PC-3 (cell line): ENCODE measurements at regions of chr4 and their contacts with region 1.

Region 1: DNA sequence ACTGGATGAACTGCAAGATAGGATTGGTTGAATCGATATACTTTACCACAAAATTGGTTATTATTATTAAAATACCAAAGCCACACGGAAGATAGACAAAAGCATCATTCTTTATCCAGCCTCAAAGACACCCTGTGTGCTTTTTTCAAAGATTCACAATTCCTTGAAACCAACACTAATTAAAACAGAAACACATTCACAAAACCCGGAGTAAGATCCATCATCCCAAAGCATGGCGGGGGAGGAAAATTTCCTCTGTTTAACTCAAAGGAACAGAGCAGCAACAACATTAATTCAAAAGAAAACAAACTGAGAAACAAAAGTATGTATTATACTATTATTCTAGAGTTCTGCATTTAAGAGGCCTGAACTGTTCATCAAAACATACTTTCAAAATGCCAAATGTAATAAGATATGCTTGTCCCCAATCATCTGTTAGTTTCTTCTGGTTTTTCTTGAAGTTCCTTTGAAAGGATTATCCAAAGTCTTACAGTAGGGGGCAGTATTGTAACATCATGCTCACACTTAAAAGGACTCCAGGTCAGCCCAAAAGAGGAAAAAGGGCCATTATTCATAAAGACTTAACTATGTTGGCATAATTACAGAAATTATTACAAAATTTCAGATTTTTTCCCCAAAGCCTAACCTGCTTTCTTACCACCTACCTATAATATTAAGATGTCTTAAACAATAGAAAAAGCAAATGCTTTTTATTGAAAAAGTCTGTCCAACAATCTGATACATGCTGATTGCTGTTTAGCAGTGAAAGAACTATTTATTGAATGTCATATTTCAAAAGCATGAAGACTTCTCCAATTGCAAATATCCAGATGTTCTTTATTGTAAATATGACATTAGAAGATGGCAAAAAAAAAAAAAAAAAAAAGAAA is 168.7 kb downstream of the SCFD2 start:
- DNase-seq: peak; percentile 89
- ATAC-seq: peak; percentile 71
- H3K4me3 ChIP-seq: no peak overlapping the region
- H3K27ac ChIP-seq: no peak overlapping the region
- H3K4me1 ChIP-seq: no peaks in the 10 kb centered on the region
- H3K27me3 ChIP-seq: no peaks in the 10 kb centered on the region
- CTCF ChIP-seq: peak; percentile 95

Region 2: DNA sequence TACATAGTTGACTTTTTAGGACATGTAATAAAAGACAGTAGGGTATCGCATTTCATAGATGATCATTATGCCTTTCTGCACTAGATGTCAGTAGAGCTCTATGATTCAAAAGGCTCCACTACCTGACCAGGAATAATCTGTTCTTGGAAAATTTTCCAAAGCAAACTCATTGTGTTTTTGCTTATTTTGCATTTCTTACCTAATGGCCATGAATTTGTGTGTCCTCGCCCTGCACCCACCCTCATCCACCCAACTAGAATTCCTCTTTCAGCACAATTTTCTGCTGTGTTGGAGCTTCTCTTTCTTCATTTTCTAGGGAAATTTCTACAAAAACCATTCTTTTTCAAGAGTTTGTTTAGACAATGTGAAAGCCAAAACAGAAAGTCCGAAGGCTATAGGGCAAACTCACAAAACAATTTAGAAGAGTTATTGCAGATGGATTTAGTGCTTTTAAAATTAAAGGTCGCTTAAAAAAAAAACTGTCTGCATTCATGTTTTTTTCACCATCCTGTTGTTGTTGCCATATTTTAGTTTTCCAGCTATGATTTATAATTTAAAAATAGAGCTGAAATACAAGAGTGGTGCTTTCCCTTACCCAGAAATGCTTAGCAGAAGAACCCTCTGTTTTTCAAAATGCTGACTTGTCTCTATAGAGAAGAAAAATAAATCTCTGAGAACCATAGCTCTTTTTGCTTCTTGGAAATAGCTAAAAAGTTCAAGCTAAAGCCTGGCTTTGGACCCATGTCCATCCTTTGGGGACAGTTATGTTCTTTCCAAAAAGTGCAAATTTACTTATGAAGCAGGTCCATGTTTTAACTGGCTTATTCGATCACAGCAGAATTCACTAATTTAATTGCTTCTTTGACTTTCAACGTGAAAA is 962.3 kb before region 1 on chr4:
- CTCF ChIA-PET with region 1: no interaction called
- POLR2A ChIA-PET with region 1: no interaction called
- intact Hi-C with region 1: loop called (anchors 5 kb)
- DNase-seq: peak; percentile 91
- ATAC-seq: peak; percentile 99
- H3K4me3 ChIP-seq: peak overlapping the region; percentile 50
- H3K27ac ChIP-seq: no peak overlapping the region
- H3K4me1 ChIP-seq: 0 out of 2 replicates have a peak, but pooled peaks cover 3% of the 10 kb centered on the region
- H3K27me3 ChIP-seq: peaks cover 13% of the 10 kb centered on the region; the same call in 1 of the 2 replicates
- CTCF ChIP-seq: peak; percentile 95

Region 3: GRCh38 chr4:53313510-53313909 is 116.4 kb after region 1 on chr4:
- CTCF ChIA-PET with region 1: no interaction called
- POLR2A ChIA-PET with region 1: no interaction called
- intact Hi-C with region 1: loop called (anchors 1 kb)
- DNase-seq: peak; percentile 53
- ATAC-seq: peak; percentile 85
- H3K4me3 ChIP-seq: no peak overlapping the region
- H3K27ac ChIP-seq: no peak overlapping the region
- H3K4me1 ChIP-seq: no peaks in the 10 kb centered on the region
- H3K27me3 ChIP-seq: no peaks in the 10 kb centered on the region
- CTCF ChIP-seq: peak; percentile 57

Region 4: DNA sequence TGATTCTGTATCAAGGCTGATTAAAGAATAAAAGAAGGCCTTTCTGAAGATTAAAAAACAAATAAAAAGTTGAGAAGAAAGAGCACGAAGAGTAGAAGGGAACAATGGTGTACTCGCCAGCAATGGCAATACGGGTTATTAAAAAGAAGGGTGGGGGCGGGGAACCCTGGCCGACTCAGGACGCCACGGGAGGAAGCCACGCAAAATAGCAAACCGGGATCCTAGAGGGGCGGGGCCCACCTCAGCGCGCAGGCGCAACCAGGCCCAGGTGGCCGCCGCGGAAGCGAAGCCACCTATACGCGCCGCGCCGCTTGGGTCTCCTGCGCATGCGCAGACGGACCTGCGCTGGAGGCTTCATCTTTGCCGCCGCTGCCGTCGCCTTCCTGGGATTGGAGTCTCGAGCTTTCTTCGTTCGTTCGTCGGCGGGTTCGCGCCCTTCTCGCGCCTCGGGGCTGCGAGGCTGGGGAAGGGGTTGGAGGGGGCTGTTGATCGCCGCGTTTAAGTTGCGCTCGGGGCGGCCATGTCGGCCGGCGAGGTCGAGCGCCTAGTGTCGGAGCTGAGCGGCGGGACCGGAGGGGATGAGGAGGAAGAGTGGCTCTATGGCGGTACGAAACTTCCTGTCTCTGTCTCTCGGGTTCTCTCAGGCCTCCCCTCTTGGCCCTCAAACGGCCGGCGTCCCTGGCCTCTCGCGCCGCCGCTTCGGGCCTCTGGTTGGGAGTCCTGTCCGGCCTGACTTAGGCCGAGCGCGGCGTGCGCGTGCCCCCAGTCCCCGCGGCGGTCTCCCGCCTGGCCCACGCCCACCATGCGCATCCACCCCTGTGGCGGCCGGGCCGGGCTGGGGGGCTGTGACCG is 180.4 kb after region 1 on chr4 and contains the start of gene FIP1L1:
- CTCF ChIA-PET with region 1: no interaction called
- POLR2A ChIA-PET with region 1: no interaction called
- intact Hi-C with region 1: loop called (anchors 5 kb)
- DNase-seq: peak; percentile 98
- ATAC-seq: peak; percentile 94
- H3K4me3 ChIP-seq: peak within 1 kb of the TSS; percentile 87
- H3K27ac ChIP-seq: peak within 1 kb of the TSS; percentile 41
- H3K4me1 ChIP-seq: peaks cover 25% of the 10 kb centered on the region
- H3K27me3 ChIP-seq: no peaks in the 10 kb centered on the region
- CTCF ChIP-seq: no peak
- total RNA-seq, gene FIP1L1: 76.1 and 102 TPM in 2 replicates

Region 5: GRCh38 chr4:53558065-53558801 is 361.1 kb after region 1 on chr4:
- CTCF ChIA-PET with region 1: interaction called, 16 read pairs
- POLR2A ChIA-PET with region 1: no interaction called
- intact Hi-C with region 1: no loop called
- DNase-seq: peak; percentile 90
- ATAC-seq: peak; percentile 96
- H3K4me3 ChIP-seq: peak overlapping the region; percentile 11; the same call in 1 of the 2 replicates
- H3K27ac ChIP-seq: peak overlapping the region; percentile 27; the same call in 1 of the 2 replicates
- H3K4me1 ChIP-seq: peaks cover 22% of the 10 kb centered on the region
- H3K27me3 ChIP-seq: no peaks in the 10 kb centered on the region
- CTCF ChIP-seq: no peak

Region 6: GRCh38 chr4:53908661-53909078 is 711.5 kb after region 1 on chr4:
- CTCF ChIA-PET with region 1: no interaction called
- POLR2A ChIA-PET with region 1: no interaction called
- intact Hi-C with region 1: loop called (anchors 1 kb)
- DNase-seq: peak; percentile 95
- ATAC-seq: peak; percentile 85
- H3K4me3 ChIP-seq: peak overlapping the region; percentile 55
- H3K27ac ChIP-seq: peak overlapping the region; percentile 27
- H3K4me1 ChIP-seq: peaks cover 25% of the 10 kb centered on the region
- H3K27me3 ChIP-seq: no peaks in the 10 kb centered on the region
- CTCF ChIP-seq: peak; percentile 97